Sigmoid colon (tissue), 7 donors: ENCODE measurements at regions of chr17 and their contacts with region 1.

Region 1: DNA sequence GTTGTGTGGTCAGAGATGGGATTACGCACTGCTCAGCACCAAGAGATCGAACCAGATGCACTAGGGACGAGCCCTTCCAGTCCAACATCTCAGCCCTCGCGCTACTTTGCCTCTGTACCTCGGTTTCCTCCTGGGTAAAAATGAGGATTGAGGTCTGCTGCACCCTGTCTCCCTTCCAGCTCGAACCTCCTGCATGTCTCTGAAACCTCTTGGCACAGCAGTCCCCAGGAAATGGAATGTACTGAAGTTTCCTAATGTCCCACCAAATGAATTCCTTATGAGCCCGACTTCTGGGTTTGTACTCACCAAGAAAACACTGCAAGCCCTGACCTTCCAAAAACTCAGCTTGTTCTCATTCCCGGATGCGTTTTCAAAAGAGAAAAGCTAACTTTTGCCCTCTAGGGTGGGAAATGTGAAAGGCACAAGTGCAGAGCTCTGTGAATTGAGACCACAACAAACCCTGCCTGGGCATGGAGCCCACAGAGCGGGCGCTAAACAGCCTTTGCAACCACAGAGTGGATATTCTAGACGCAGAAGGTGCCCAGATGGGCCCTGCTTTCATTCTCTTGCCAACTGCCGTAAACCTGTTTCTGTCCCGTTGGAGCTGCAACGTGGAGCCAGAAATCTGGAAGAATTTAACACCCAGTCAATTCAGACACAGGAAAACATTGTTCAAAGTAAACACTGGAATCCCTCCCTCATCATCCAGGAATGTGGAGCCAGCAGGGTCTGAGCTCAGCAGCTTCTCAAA is 10.3 kb downstream of the CDRT4 start:
- DNase-seq: peak; percentile 95
- H3K4me3 ChIP-seq: no peak overlapping the region
- H3K27ac ChIP-seq: peak overlapping the region; percentile 78 to 85 (median 82)
- H3K4me1 ChIP-seq: peaks cover 0 to 50% (median 47%) of the 10 kb centered on the region in 4 donors
- H3K27me3 ChIP-seq: no peaks in the 10 kb centered on the region
- CTCF ChIP-seq: peak; percentile 39 to 56 (median 50)
- EP300 ChIP-seq: peak in 3 of 4 donors; percentile 27 to 66 (median 52)
- POLR2A ChIP-seq: no peak

Region 2: DNA sequence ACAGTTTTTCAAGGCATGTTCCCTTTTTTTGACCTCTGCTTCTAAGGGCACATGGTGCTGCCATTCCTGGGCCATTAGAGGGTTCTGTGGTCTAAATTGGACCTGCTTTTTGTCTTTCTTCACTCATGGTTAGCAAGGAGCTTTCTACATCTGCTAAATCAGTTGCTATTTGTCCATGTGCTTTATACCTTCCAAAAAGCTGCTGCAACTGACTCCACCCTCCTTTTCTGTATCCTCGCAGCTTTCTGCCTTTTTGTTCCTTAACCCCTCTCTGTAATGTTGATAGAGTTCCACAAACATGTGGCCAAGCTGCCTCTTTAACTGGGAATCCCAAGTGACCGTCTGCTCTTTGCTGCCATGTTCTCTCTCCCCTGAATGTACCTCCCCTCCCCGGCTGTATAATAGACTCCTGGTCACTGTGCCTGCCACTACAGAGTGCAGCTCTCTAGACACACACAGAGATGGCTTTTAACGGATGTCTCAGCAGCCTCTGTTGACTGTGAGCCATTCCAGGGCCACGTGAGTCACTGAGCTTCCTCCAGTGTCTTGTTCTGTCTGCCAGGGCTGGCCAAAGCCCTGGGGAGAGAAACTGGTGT is 58.3 kb before region 1 on chr17:
- intact Hi-C with region 1: loop called (anchors 5 kb)
- DNase-seq: no peak
- H3K4me3 ChIP-seq: no peak overlapping the region
- H3K27ac ChIP-seq: peak overlapping the region; percentile 25 to 70 (median 68)
- H3K4me1 ChIP-seq: peaks cover 0 to 62% (median 49%) of the 10 kb centered on the region in 4 donors
- H3K27me3 ChIP-seq: no peaks in the 10 kb centered on the region
- CTCF ChIP-seq: no peak
- EP300 ChIP-seq: no peak
- POLR2A ChIP-seq: no peak

Region 3: DNA sequence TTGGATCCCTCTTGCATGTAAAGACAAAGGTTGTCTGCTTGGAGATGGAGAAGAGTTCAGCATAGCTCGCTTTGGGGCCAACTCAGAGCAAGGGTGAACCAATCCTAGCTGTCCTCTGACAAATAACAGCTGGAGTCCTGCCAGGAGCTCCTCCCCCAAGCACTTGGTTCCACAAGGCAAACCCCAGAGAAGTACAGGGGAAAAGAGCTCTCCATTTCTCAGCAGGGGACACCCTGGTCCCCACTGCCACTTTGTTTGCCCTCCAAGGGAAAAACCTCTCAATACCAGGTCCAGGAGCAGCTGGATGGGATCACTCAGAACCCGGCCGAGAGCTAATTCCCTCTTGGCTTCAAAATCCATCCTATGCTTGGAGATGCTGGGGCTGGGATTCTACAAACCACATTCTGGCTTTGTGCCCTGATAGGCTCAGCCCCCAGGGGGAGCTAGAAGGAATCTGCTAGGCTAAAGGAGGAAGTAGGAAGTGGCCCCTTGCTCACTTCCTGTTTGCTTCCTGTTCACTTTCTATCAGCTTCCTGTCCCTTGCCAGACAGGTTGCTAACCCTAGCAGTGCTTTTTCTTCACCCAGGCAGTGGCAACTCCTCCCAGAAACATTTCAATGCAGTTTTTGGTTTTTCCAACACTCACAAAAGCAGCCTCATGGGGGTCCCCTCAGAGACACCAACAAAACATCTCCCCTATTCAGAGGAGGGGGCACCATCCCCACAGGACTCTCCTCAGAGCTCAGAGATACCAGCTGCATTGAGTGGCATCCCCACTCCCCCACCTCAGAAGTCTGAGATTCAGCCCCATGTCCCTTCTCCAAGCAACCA is 20.5 kb before region 1 on chr17:
- intact Hi-C with region 1: loop called (anchors 2 kb)
- DNase-seq: peak; percentile 91
- H3K4me3 ChIP-seq: no peak overlapping the region
- H3K27ac ChIP-seq: peak overlapping the region; percentile 30 to 83 (median 52)
- H3K4me1 ChIP-seq: peaks cover 0 to 50% (median 43%) of the 10 kb centered on the region in 4 donors
- H3K27me3 ChIP-seq: no peaks in the 10 kb centered on the region
- CTCF ChIP-seq: no peak
- EP300 ChIP-seq: no peak
- POLR2A ChIP-seq: no peak

Region 4: DNA sequence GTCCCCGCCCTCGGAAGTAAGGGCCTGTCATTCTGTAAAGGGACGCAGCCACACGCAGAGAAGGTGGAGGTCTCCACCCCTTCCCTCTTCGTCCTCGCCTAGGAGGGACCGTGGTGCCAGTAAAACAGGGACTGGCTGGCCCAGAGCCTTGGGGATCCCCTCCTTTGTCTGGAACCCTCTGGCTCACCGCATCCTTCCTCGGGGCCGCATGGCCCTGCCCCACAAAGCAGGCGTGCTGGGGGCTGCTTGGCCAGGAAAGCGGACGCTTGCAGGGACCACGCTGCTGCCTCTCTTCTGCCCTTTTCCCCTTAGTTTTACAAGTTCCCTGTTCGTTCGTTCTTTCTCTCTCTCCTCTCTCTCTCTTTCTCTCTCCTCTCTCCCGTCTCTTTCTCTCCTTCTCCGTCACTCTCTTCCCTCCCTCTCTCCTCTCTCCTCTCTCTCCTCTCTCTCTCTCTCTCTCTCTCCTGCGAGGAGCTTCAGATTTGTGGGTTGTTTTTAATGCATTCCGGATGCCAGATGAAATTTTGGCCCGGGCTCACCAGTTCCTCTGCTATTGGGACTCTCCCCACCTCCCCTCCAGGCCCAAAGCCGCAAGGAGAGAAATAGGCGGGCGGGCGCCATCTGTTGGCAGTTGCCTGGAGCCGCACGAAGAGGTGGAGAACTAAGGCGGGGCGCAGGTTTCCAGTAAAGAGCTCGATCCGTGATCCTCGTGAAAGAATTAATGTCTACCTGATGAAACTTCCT is 45.4 kb after region 1 on chr17:
- intact Hi-C with region 1: loop called (anchors 2 kb)
- DNase-seq: peak; percentile 97
- H3K4me3 ChIP-seq: peak overlapping the region; percentile 21 to 44 (median 41)
- H3K27ac ChIP-seq: peak overlapping the region; percentile 72 to 82 (median 80)
- H3K4me1 ChIP-seq: peaks cover 0 to 19% (median 13%) of the 10 kb centered on the region in 4 donors
- H3K27me3 ChIP-seq: no peaks in the 10 kb centered on the region
- CTCF ChIP-seq: peak; percentile 88 to 89 (median 88)
- EP300 ChIP-seq: peak in 1 of 4 donors; percentile 29
- POLR2A ChIP-seq: no peak